Activated CD4-positive, alpha-beta T cell treated with anti-CD3 and anti-CD28 coated beads, Interleukin-2, amount 10 ng/mL, durations not matched to agents 24 days and 14 days (primary cell): ENCODE measurements at regions of chr6 and their contacts with region 1.

Region 1: GRCh38 chr6:33123732-33124524 is 48.1 kb downstream of the HLA-DPB1 start:
- DNase-seq: peak; percentile 80
- H3K4me3 Mint-ChIP-seq: no peak overlapping the region
- H3K27ac Mint-ChIP-seq: no peak overlapping the region
- H3K4me1 Mint-ChIP-seq: peaks cover 11% of the 10 kb centered on the region
- H3K27me3 Mint-ChIP-seq: peaks cover 26% of the 10 kb centered on the region

Region 2: DNA sequence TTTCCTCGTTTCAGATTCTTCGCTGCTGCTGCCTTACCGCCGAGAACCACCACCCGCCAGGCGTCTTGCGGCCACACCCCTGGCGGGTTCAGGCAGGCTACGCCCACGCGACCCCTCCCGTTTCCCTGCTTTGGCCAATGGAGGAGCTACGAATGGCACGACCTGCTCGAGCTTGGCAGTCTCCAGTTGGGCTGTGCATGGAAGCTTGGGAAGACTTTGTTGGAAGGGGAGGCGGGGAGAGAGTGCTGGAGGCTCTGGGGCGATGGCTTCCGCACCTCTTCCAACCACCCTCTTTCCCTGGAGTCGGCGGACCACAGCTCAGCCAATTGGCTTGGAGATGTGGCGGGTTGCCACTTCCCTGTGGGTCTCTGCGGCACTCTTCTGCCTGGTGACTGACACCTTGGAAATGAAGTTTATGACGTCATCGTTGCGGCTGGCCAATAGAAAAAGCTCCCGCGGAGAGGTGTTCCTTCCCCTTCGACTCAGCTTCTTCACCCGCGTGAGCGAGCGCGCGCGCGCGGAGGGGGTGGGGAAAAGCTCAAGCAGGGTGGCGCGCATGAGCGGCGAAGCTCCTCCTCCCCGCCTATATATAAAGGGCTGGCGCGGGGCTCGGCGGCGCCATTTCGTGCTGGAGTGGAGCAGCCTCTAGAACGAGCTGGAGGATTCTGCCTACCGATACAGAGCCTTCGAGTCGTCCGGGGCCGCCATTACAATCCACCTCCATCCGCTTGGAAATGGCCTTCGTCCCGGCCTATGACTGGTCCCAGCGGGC is 152.2 kb before region 1 on chr6:
- intact Hi-C with region 1: no loop called
- DNase-seq: peak; percentile 100
- H3K4me3 Mint-ChIP-seq: peak overlapping the region; percentile 94
- H3K27ac Mint-ChIP-seq: peak overlapping the region; percentile 100
- H3K4me1 Mint-ChIP-seq: peaks cover 33% of the 10 kb centered on the region
- H3K27me3 Mint-ChIP-seq: no peaks in the 10 kb centered on the region

Region 3: GRCh38 chr6:33147807-33148666 is 24.1 kb after region 1 on chr6:
- intact Hi-C with region 1: loop called (anchors 2 kb)
- DNase-seq: no peak
- H3K4me3 Mint-ChIP-seq: no peak overlapping the region
- H3K27ac Mint-ChIP-seq: no peak overlapping the region
- H3K4me1 Mint-ChIP-seq: peaks cover 3% of the 10 kb centered on the region
- H3K27me3 Mint-ChIP-seq: peaks cover 31% of the 10 kb centered on the region